ENCODE measurements at regions of chr2 and their contacts with region 1.

Region 1: DNA sequence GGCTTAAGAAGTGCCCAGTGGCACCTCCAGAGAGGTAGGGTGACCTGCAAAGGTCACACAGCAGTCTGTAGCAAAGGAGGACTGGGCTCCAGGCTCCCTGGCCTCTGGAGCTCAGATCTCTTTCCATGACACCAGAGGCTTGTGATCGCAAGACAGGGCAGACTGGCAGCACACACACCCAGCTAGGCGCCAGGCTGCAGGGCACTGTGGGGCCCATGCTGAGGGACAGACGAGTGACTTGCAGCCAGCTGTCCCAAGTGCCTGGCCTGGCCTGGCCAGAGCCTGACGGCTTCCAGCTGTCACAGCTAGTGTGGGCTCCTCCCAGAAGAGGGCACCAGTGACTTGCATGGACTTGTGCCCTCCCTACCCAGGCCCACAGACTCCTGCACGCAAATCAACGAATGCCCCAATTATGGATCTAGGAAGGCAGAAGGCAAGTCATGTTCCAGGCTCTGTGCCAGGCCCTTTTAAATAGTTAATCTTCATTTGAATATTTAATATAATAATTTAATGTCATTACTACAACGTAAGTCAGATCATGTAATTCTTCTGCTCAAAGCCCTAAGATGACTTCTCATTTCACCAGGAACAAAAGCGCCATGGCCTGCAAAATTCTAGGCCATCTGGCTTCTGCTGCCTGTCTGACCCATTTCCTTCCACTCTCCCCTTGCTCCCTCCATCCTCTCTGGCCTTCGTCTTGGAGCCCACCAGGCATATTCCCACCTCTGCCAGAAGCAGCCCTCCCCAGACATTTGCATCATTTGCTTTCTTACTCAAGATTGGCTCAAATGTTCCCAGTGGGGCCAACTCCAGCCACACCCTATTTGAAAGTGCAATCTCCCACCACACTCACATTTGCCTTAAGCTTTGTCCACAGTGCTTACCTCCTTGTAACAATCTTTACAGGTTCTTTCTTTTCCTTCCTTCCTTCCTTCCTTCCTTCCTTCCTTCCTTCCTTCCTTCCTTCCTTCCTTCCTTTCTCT is 3.7 kb upstream of the SPEG start:
- DNase-seq: no peak
- ATAC-seq: peak; percentile 36
- H3K4me3 Mint-ChIP-seq: no peak overlapping the region
- H3K27ac Mint-ChIP-seq: peak overlapping the region; percentile 69; the same call in 1 of the 2 replicates
- H3K4me1 Mint-ChIP-seq: peaks cover 8% of the 10 kb centered on the region
- H3K27me3 Mint-ChIP-seq: peaks cover 20% of the 10 kb centered on the region
- CTCF ChIP-seq: no peak

Region 2: DNA sequence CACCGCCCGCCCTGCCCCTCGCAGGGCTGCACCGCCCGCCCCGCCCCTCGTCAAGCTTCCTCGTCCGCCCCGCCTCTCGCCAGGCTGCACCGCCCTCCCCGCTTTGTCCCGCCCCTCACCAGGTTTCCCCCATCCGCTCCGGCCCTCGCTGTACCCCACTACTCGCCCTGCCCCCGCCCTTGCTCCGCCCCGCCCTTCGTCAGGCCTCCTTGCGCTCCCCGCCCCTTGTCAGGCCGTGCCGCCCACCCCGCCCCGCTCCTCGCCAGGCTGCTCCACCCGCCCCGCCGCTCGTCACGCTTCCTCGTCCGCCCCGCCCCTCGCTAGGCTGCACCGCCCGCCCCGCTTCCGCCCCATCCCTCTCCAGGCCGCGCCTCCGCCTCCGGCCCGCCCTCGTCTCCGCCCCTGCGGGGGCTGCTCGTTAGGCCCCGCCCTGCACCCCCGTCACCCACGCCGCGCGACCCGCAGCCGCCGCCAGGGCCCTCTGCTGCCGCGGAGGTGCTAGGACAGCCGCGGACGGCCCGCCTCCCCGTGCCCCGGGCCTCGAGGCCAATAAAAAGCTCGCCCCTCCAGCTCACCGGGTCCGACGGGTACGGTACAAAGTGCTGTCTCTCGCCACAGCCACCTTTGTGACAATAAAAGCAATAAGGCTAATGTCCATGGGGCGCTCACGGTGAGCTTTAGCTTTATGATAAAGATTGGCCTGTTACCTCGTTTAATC is 42.6 kb before region 1 on chr2:
- CTCF ChIA-PET with region 1: interaction called, 27 read pairs
- POLR2A ChIA-PET with region 1: interaction called, 4 read pairs
- DNase-seq: peak; percentile 97
- ATAC-seq: peak; percentile 76
- H3K4me3 Mint-ChIP-seq: peak overlapping the region; percentile 76
- H3K27ac Mint-ChIP-seq: no peak overlapping the region; the same call in 1 of the 2 replicates
- H3K4me1 Mint-ChIP-seq: peaks cover 7% of the 10 kb centered on the region
- H3K27me3 Mint-ChIP-seq: 0 out of 2 replicates have a peak, but pooled peaks cover 3% of the 10 kb centered on the region
- CTCF ChIP-seq: no peak

Region 3: DNA sequence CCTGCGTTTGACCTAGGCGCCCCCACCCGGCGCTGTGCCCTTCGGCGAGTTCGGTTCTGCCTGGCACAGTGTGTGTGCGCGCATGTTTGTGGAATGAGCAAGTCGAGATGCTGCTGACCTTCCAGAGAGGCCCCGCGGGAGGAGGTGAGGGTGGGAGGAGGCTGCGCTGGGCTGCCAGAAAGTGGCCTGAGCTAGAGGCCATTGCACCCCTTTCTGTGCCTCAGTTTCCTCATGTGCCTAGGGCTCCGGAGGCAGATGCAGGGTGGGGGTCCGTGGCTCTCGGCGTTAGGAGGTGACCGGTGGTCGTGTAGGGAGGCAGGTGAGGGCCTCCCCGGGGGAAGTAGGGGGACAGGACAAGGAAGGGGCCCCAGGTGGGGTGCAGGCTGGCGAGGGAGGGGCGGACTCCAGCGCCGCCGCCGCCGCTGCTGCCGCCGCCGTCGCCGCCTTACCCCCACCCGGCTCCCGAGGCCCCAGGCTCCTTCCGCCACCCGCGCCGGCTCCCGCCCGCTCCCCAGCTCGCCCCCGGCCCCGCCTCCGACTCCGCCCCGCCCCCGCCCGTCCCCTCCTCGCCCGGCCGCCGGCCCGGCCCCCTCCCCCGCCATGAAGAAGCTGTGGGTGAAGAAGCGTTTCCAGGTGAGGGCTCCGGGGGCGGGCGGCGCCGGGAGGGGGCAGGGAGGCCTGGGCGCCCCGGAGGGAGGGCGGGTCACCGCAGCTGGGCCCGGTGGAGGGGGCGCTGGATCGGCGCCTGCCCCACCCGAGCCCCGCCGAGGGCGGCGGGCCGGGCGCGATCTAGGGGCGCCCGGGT is 10.7 kb after region 1 on chr2:
- CTCF ChIA-PET with region 1: interaction called, 19 read pairs
- POLR2A ChIA-PET with region 1: no interaction called
- DNase-seq: peak; percentile 62
- ATAC-seq: peak; percentile 60
- H3K4me3 Mint-ChIP-seq: peak overlapping the region; percentile 82
- H3K27ac Mint-ChIP-seq: no peak overlapping the region
- H3K4me1 Mint-ChIP-seq: peaks cover 27% of the 10 kb centered on the region
- H3K27me3 Mint-ChIP-seq: peaks cover 22% of the 10 kb centered on the region
- CTCF ChIP-seq: no peak

Region 4: DNA sequence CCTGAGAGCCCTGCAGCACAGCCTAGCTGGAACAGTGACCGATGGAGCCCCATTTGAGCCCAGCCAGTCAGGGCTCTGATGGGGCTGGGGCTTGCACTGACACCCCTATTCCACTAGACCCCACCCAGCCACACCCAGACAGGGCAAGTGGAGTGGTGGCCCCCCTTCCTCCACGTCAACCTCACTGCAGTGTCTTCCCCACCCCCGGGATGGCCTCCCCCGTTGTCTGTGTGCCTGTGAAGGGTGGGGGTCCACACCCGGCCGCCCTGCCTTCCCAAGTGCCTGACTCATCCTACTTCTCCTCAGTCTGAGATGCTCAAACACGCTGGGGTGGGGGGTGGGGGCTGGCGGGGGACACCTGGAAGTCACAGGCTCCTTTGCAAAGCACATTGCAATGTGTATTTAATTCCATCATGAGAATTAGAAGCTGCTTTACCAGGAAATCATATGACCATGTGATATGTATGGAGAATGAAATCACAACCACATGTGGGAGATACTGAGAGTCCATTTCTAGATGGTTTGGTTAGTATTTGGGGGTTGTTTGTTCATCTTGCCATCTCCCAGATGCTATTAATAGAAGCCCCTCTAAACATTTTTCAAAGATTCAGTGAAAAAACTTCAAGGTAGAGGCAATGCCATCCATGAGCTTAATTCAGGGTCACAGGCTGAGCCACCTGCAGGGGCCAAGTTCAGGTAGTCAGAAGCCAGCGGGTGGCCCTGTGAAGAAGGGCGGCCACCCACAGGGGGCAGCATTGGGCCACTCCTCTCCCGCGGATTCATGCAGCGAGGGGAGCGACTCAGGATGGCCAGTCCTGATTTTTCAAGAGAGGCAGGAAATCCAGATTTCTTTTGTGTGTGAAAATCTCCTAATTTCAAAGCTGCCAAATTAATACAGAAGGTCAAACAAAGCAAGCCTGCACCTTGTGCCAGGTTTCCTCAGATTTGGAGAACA is 45.0 kb after region 1 on chr2:
- CTCF ChIA-PET with region 1: interaction called, 14 read pairs
- POLR2A ChIA-PET with region 1: no interaction called
- DNase-seq: peak; percentile 86
- ATAC-seq: peak; percentile 48
- H3K4me3 Mint-ChIP-seq: peak overlapping the region; percentile 68
- H3K27ac Mint-ChIP-seq: peak overlapping the region; percentile 81; the same call in 1 of the 2 replicates
- H3K4me1 Mint-ChIP-seq: peaks cover 24% of the 10 kb centered on the region
- H3K27me3 Mint-ChIP-seq: no peaks in the 10 kb centered on the region; the same call in 1 of the 2 replicates
- CTCF ChIP-seq: peak; percentile 91

Region 5: GRCh38 chr2:219521066-219521880 is 90.3 kb after region 1 on chr2:
- CTCF ChIA-PET with region 1: interaction called, 12 read pairs
- POLR2A ChIA-PET with region 1: no interaction called
- DNase-seq: peak; percentile 80
- ATAC-seq: peak; percentile 68
- H3K4me3 Mint-ChIP-seq: peak overlapping the region; percentile 64
- H3K27ac Mint-ChIP-seq: peak overlapping the region; percentile 58
- H3K4me1 Mint-ChIP-seq: peaks cover 64% of the 10 kb centered on the region
- H3K27me3 Mint-ChIP-seq: peaks cover 32% of the 10 kb centered on the region
- CTCF ChIP-seq: peak; percentile 49; the same call in 1 of the 2 replicates

Measured in WTC11 (cell line).